ENCODE measurements at regions of chr10 and their contacts with region 1.

Region 1: GRCh38 chr10:59906417-59907202 is at the start of gene CCDC6:
- DNase-seq: peak; percentile 93
- ATAC-seq: peak; percentile 82
- H3K4me3 Mint-ChIP-seq: peak within 1 kb of the TSS; percentile 98
- H3K27ac Mint-ChIP-seq: peak within 1 kb of the TSS; percentile 100
- H3K4me1 Mint-ChIP-seq: peaks cover 57% of the 10 kb centered on the region
- H3K27me3 Mint-ChIP-seq: no peaks in the 10 kb centered on the region
- CTCF ChIP-seq: no peak; the same call in 1 of the 2 replicates
- total RNA-seq, gene CCDC6: 48.4 to 55.2 TPM (median 49.8 TPM) in 3 replicates

Region 2: DNA sequence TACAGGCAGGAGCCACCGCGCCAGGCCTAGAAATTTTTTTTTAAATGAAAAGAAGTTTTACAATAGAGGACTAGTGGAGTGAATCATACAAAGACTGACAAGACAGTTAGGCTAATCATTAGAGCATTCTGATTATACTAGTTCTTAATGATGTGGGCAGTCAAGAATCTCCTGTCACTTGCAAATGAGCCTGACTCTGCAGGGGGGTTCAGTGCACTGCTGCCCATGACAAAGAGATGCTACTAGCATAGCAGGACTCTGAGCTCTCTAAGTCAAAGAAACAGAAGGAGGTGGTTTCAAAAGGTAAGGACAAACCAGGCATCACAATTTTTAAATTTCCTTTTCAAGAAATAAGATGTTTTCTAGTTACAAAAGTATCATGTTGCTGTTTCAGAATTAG is 59.3 kb before region 1 on chr10:
- CTCF ChIA-PET with region 1: interaction called, 10 read pairs
- POLR2A ChIA-PET with region 1: interaction called, 5 read pairs
- DNase-seq: peak; percentile 73
- ATAC-seq: peak; percentile 95
- H3K4me3 Mint-ChIP-seq: peak overlapping the region; percentile 45
- H3K27ac Mint-ChIP-seq: peak overlapping the region; percentile 85
- H3K4me1 Mint-ChIP-seq: peaks cover 56% of the 10 kb centered on the region
- H3K27me3 Mint-ChIP-seq: peaks cover 4% of the 10 kb centered on the region; the same call in 1 of the 2 replicates
- CTCF ChIP-seq: no peak

Region 3: DNA sequence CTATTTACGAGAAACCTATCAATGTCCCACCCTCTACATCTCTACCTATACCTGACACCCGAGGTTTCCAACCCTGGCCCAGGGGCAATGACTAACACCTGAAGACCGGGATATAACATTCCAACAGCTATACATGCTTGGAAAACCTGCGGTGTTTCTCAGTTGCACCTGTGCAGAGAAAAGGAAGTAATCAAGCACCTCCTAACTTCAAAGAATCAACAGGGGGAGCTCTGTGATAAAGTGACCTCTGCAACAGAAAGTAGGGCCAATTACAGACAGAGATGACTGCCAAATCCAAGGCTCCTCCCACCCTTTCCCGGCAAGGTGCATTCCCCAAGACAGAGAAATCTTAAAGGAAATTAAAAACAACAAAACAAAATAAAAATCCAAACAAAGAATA is 41.5 kb before region 1 on chr10:
- CTCF ChIA-PET with region 1: interaction called, 28 read pairs
- POLR2A ChIA-PET with region 1: interaction called, 4 read pairs
- DNase-seq: peak; percentile 26
- ATAC-seq: peak; percentile 91
- H3K4me3 Mint-ChIP-seq: no peak overlapping the region
- H3K27ac Mint-ChIP-seq: peak overlapping the region; percentile 21; the same call in 1 of the 2 replicates
- H3K4me1 Mint-ChIP-seq: peaks cover 52% of the 10 kb centered on the region
- H3K27me3 Mint-ChIP-seq: no peaks in the 10 kb centered on the region; the same call in 1 of the 2 replicates
- CTCF ChIP-seq: no peak

Measured in WTC11 (cell line).